Activated CD4-positive, alpha-beta memory T cell treated with anti-CD3 and anti-CD28 coated beads, Interleukin-2, amount 10 ng/mL, durations not matched to agents 7 days and 5 days (primary cell): ENCODE measurements at regions of chr1 and their contacts with region 1.

Region 1: DNA sequence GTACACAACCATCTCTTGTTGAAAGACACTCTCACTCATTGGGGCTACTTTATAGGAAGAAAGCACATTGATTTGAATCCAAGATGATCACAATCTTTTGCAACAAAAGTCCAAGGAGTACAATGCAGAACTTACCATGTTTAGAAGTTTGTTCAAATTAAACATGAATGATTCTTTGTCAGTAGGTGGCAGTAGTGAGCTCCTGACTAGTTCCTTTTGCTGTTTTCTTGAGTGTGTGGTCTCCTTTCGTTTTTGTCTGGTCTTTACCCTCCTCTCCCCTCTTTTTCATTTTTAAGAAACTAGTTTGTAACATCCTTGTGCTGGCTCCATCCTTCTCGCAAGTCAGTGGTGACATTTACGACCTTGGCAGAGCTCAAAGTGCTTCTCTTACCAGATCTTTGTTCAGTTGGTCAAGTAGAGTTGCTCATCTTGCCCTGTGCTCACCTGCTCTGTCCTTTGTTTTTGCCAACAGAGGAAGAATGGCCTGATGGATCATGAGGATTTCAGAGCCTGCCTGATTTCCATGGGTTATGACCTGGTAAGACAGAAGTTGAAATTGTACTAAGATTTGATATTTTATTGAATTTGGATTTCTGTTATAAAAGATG is 35.7 kb upstream of the MTR start:
- DNase-seq: no peak
- H3K4me3 Mint-ChIP-seq: no peak overlapping the region
- H3K27ac Mint-ChIP-seq: no peak overlapping the region
- H3K4me1 Mint-ChIP-seq: no peaks in the 10 kb centered on the region
- H3K27me3 Mint-ChIP-seq: peaks cover 3% of the 10 kb centered on the region

Region 2: GRCh38 chr1:236748471-236748870 is 10.9 kb before region 1 on chr1:
- CTCF ChIA-PET with region 1: interaction called, 11 read pairs
- POLR2A ChIA-PET with region 1: no interaction called
- DNase-seq: no peak
- H3K4me3 Mint-ChIP-seq: no peak overlapping the region
- H3K27ac Mint-ChIP-seq: no peak overlapping the region
- H3K4me1 Mint-ChIP-seq: no peaks in the 10 kb centered on the region
- H3K27me3 Mint-ChIP-seq: peaks cover 18% of the 10 kb centered on the region

Region 3: GRCh38 chr1:236868625-236869467 is 109.5 kb after region 1 on chr1:
- CTCF ChIA-PET with region 1: interaction called, 18 read pairs
- POLR2A ChIA-PET with region 1: no interaction called
- DNase-seq: peak; percentile 53
- H3K4me3 Mint-ChIP-seq: no peak overlapping the region
- H3K27ac Mint-ChIP-seq: no peak overlapping the region
- H3K4me1 Mint-ChIP-seq: peaks cover 9% of the 10 kb centered on the region
- H3K27me3 Mint-ChIP-seq: no peaks in the 10 kb centered on the region

Region 4: DNA sequence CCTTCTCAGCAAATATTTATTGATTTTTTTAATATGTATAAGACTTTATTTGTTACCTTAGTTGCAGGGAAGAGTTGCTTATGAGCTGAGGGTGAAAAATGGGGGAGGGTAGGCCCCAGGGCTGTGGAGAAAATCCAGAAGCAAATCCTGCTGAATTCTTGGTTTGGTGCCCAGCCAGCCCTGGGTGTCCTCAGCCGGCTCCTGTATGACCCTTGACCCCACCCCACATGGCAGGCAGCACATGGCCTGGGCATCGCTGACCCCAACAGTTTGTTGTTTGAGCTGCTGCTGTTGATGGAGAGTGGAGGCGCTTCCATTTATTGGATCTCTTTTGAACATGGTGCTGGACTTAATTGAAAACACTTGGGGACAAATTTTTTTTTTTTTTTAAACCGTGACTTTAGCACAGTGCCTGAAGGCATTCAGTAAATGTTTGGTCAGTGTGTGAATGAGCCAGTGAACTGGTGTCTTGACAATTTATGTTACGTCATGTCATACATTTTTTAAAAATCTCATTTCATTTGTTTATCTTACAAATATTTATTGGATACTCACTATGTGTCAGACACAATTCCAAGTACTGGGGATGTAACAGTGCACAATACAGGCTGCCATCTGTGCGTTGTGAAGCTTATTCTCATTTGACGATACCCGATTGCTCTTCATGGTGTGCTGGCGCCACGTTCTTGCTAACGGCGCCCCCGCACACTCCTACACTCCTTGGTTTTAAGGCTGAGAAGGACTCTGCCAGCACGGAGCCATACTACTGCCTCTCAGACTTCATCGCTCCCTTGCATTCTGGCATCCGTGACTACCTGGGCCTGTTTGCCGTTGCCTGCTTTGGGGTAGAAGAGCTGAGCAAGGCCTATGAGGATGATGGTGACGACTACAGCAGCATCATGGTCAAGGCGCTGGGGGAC is 134.5 kb after region 1 on chr1:
- CTCF ChIA-PET with region 1: no interaction called
- POLR2A ChIA-PET with region 1: no interaction called
- DNase-seq: no peak
- H3K4me3 Mint-ChIP-seq: no peak overlapping the region
- H3K27ac Mint-ChIP-seq: no peak overlapping the region
- H3K4me1 Mint-ChIP-seq: no peaks in the 10 kb centered on the region
- H3K27me3 Mint-ChIP-seq: no peaks in the 10 kb centered on the region

Region 5: GRCh38 chr1:236913371-236914037 is 154.1 kb after region 1 on chr1:
- CTCF ChIA-PET with region 1: no interaction called
- POLR2A ChIA-PET with region 1: no interaction called
- DNase-seq: no peak
- H3K4me3 Mint-ChIP-seq: no peak overlapping the region
- H3K27ac Mint-ChIP-seq: no peak overlapping the region
- H3K4me1 Mint-ChIP-seq: no peaks in the 10 kb centered on the region
- H3K27me3 Mint-ChIP-seq: peaks cover 2% of the 10 kb centered on the region

Region 6: DNA sequence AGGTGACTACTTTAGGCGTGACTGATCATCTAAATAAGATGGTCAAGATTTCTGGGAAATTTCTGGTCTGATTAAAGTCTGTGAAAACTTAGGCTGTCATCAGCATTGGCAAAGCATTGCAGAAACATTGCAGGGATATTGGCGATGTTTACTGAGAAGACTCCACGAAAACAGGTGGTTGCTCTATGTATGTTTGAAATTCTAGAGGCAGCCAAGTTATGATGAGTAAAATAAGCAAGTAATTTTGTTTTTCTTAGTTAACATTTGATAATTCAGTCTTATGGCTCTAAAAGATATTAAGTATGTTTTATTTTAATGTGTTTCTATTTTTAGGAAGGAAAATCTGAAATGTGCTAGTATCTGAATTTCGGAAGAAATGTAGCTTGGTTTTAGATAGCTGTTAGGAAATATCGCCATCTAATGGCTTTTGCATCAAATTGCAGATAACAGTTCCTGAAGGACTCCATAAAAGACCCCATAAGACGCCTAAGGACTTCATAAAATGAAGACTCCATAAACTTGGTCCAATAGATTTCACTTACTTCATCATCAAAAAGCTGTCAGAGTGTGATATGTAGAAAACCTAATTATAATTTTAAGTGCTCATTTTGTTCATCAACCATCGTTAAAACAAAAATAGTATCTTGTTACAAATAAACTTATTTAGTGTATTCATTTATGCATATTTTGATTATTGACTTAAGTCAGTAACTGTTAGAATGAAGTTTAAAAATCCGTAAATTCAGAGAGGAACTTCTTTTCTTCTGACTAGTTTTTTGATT is 627.2 kb after region 1 on chr1:
- CTCF ChIA-PET with region 1: interaction called, 17 read pairs
- POLR2A ChIA-PET with region 1: no interaction called
- DNase-seq: no peak
- H3K4me3 Mint-ChIP-seq: no peak overlapping the region
- H3K27ac Mint-ChIP-seq: no peak overlapping the region
- H3K4me1 Mint-ChIP-seq: no peaks in the 10 kb centered on the region
- H3K27me3 Mint-ChIP-seq: peaks cover 2% of the 10 kb centered on the region

Region 7: GRCh38 chr1:237562242-237562823 is 803.0 kb after region 1 on chr1:
- CTCF ChIA-PET with region 1: interaction called, 13 read pairs
- POLR2A ChIA-PET with region 1: no interaction called
- DNase-seq: no peak
- H3K4me3 Mint-ChIP-seq: no peak overlapping the region
- H3K27ac Mint-ChIP-seq: no peak overlapping the region
- H3K4me1 Mint-ChIP-seq: no peaks in the 10 kb centered on the region
- H3K27me3 Mint-ChIP-seq: peaks cover 6% of the 10 kb centered on the region